ENCODE measurements at regions of chr14 and their contacts with region 1.

Region 1: GRCh38 chr14:106872611-106873446 is 1346.4 kb downstream of the TMEM121 start:
- H3K4me3 ChIP-seq: no peak overlapping the region
- H3K27ac ChIP-seq: no peak overlapping the region
- H3K4me1 ChIP-seq: 0 out of 2 replicates have a peak, but pooled peaks cover 4% of the 10 kb centered on the region
- CTCF ChIP-seq: peak; percentile 86

Region 2: GRCh38 chr14:106776395-106776983 is 96.3 kb before region 1 on chr14:
- CTCF ChIA-PET with region 1: interaction called, 10 read pairs
- POLR2A ChIA-PET with region 1: no interaction called
- H3K4me3 ChIP-seq: no peak overlapping the region
- H3K27ac ChIP-seq: no peak overlapping the region
- H3K4me1 ChIP-seq: no peaks in the 10 kb centered on the region
- CTCF ChIP-seq: no peak

Region 3: DNA sequence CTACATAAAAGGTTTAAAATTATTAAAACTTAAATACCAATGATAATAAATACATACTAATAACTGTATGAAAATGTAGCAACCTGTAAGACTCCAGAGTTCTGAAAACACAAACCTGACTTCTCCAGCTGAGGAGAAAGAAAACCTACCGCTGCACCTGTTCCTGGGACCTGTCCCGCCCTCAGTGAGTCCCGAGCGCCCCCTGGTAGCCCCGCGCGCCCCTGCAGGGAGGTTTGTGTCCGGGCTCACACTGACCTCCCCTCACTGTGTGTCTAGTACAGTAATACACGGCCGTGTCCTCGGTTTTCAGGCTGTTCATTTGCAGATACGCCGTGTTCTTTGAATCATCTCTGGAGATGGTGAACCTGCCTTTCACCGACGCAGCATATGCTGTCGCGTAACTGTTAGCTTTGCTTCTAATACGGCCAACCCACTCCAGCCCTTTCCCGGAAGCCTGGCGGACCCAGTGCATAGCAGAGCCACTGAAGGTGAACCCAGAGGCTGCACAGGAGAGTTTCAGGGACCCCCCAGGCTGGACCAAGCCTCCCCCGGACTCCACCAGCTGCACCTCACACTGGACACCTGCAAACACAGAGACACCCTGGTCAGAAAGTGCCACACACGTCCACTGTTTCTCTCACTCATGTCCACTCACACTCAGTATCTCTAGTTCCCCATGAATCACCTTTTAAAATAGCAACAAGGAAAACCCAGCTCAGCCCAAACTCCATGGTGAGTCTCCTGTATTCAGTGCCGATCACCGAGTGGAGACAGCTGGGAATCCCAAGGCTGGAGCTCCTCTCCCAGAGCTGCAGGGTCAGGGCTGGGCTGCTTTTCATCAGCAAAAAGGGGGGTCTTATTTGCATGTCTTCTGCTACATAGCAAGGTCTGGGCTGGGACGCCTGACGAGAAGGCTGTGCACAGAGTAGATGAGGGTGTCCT is 70.1 kb before region 1 on chr14:
- CTCF ChIA-PET with region 1: interaction called, 18 read pairs
- POLR2A ChIA-PET with region 1: no interaction called
- H3K4me3 ChIP-seq: no peak overlapping the region
- H3K27ac ChIP-seq: no peak overlapping the region
- H3K4me1 ChIP-seq: no peaks in the 10 kb centered on the region
- CTCF ChIP-seq: peak; percentile 27; the same call in 1 of the 2 replicates

Region 4: DNA sequence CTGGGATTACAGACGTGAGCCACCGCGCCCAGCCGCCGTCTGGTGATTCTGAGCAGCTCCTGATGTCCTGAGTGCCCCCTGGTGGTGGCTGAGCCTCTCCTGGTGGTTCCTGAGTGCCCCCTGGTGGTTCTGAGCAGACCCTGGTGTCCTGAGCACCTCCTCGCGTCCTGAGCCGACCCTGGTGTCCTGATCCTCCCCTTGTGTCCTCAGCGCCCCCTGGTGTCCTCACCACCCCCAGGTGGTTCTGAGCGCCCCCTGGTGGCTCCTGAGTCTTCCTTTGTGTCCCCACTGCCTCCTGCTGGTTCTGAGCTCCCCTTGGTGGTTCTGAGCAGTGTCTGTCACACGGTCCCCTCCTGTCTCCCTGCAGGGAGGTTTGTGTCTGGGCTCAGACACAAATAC is 41.5 kb before region 1 on chr14:
- CTCF ChIA-PET with region 1: interaction called, 261 read pairs
- POLR2A ChIA-PET with region 1: no interaction called
- H3K4me3 ChIP-seq: no peak overlapping the region
- H3K27ac ChIP-seq: no peak overlapping the region
- H3K4me1 ChIP-seq: no peaks in the 10 kb centered on the region
- CTCF ChIP-seq: peak; percentile 80

Region 5: GRCh38 chr14:106883218-106883692 is 10.4 kb after region 1 on chr14:
- CTCF ChIA-PET with region 1: interaction called, 26 read pairs
- POLR2A ChIA-PET with region 1: no interaction called
- H3K4me3 ChIP-seq: no peak overlapping the region
- H3K27ac ChIP-seq: no peak overlapping the region
- H3K4me1 ChIP-seq: no peaks in the 10 kb centered on the region
- CTCF ChIP-seq: peak; percentile 89